ENCODE measurements at regions of chr6 and their contacts with region 1.

Region 1: GRCh38 chr6:38671885-38672467 is 31.0 kb downstream of the GLO1 start:
- DNase-seq: peak; percentile 56
- H3K4me3 ChIP-seq: no peak overlapping the region
- H3K27ac ChIP-seq: no peak overlapping the region
- H3K4me1 ChIP-seq: no peaks in the 10 kb centered on the region
- H3K27me3 ChIP-seq: no peaks in the 10 kb centered on the region
- CTCF ChIP-seq: peak; percentile 66 to 88

Region 2: DNA sequence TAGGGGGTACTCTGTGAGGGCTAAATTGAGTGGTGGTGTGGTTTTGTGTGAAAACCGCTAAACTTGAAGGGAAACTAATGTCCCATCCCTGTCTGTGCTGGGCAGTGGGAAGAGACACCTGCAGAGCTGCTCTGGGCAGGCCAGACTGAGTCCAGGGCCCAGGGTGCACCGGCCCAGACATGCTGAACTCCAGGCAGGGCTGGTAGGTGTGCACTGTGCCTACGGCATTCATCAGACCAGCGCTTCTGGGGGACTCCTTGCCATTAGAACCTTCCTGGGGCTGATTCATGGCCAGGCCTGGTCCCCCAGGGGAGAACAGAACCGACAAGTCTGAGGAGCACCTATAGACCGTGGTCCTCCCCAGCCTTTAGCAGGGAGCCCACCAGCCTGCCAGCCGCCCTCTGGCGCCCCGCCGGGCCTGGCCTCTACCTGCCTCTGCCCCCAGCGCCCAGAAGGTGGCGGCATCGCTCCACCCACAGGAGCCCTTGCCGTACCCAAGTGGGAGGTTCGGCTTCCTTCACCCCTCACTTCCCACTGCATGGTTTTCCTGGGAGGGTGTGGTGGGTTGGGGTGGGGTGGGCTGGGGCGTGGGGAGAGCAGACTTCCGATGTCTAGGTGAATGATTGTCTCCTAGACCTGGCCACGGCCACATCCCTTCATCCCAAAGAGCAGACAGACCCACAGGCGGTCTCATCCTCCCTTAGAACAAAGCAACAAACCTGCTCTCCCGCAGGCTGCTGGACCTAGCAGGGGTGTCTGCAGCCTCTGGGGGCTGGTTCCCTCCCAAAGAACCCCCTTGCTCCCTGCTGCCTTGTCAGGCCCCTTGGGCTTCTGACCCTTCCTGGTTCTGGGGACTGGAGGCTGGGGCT is 1187.8 kb before region 1 on chr6:
- CTCF ChIA-PET with region 1: no interaction called
- dilution Hi-C with region 1: no loop called
- in situ Hi-C with region 1: no loop called
- intact Hi-C with region 1: loop called (anchors 10 kb)
- DNase-seq: peak; percentile 20
- H3K4me3 ChIP-seq: no peak overlapping the region
- H3K27ac ChIP-seq: no peak overlapping the region
- H3K4me1 ChIP-seq: no peaks in the 10 kb centered on the region
- H3K27me3 ChIP-seq: no peaks in the 10 kb centered on the region
- CTCF ChIP-seq: peak; percentile 81 to 87

Region 3: DNA sequence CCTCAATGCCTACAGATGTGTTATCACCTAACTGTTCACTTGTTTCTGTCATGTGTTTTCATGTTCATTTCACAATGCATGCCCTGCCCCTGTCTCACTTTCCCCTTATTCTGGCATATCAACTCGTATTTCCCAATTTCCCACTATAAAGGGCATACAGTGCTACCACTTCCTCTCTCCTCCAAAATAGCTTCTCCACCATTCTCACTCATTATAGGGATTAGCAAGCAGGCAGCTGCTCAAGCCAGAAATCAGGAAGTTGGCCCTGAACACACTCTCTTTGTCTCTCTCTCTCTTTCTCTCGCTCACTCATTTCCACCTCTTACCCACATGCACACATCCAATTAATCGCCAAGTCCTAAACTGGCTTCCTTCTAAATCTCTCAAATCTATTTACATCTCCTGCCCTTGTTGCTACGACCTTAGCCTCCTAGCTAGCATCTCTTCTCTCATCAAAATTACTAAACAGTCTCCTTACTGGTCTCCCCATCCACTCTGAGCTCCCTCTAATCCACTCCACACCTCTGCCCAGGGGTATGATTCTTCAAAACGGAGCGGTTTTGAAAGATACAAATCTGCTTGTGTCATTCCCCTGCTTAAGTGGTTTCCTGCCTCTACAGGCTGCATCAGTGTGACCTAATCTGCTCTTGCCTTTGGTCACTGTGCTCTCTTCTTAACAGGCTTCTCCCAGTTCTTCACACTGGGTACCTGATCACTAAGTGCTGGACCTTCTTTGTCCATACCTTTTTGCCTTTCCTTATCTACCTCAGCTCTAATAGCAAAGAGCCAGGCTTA is 228.4 kb before region 1 on chr6:
- CTCF ChIA-PET with region 1: no interaction called
- dilution Hi-C with region 1: no loop called
- in situ Hi-C with region 1: no loop called
- intact Hi-C with region 1: no loop called
- DNase-seq: no peak
- H3K4me3 ChIP-seq: no peak overlapping the region
- H3K27ac ChIP-seq: no peak overlapping the region
- H3K4me1 ChIP-seq: no peaks in the 10 kb centered on the region
- H3K27me3 ChIP-seq: no peaks in the 10 kb centered on the region
- CTCF ChIP-seq: no peak

Region 4: DNA sequence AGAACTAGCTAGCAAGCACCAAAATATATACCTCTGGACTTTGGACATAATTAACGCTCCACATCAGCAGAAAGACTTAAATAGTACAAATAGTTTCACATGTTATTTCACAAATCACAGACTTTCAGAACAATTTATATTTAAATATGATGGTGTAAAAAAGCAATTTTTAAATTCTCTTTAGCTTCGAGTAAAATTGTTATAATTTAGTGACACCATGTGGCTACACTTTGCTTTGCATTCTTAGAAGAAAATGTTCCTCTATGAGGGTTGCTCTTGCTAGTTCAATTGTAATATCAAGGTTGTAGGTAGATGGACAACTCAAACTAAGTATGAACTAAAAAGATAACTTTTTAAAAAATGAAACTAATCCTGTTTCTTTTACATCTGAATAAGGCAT is 101.2 kb before region 1 on chr6:
- CTCF ChIA-PET with region 1: no interaction called
- dilution Hi-C with region 1: no loop called
- in situ Hi-C with region 1: no loop called
- intact Hi-C with region 1: loop called (anchors 2 kb)
- DNase-seq: no peak
- H3K4me3 ChIP-seq: no peak overlapping the region
- H3K27ac ChIP-seq: no peak overlapping the region
- H3K4me1 ChIP-seq: no peaks in the 10 kb centered on the region
- H3K27me3 ChIP-seq: no peaks in the 10 kb centered on the region
- CTCF ChIP-seq: peak; percentile 21 to 32

Region 5: DNA sequence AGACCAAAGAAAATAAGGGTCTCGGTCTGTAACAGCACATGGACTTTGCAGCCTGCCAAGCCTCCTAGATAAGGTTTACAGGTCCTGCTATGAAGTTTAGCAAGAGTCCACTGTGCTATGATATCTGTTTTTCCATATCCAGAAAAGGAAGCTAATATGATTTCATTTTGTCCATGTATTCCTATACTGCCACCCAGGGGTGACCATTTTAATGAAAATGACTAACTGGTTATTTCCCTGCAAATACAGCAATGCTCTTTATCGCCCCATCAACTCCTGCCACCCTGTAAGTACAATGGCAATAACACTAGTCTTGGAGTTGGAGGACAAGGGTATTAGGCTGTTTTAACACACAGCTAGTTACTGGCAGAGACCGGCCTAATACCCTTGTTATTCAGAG is 261.5 kb after region 1 on chr6:
- CTCF ChIA-PET with region 1: no interaction called
- dilution Hi-C with region 1: no loop called
- in situ Hi-C with region 1: no loop called
- intact Hi-C with region 1: loop called (anchors 10 kb)
- DNase-seq: peak; percentile 32
- H3K4me3 ChIP-seq: no peak overlapping the region
- H3K27ac ChIP-seq: no peak overlapping the region
- H3K4me1 ChIP-seq: no peaks in the 10 kb centered on the region
- H3K27me3 ChIP-seq: peaks cover 1% of the 10 kb centered on the region
- CTCF ChIP-seq: peak; percentile 24 to 53